Naive thymus-derived CD4-positive, alpha-beta T cell (primary cell): ENCODE measurements at regions of chr10 and their contacts with region 1.

Region 1: GRCh38 chr10:8053446-8054290 is 820 bp upstream of the GATA3 start:
- DNase-seq: peak; percentile 73 to 97 (median 89)
- ATAC-seq: peak; percentile 77
- H3K4me3 ChIP-seq: peak overlapping the region; percentile 87
- H3K4me3 Mint-ChIP-seq: peak overlapping the region; percentile 87 to 97 (median 94)
- H3K27ac ChIP-seq: peak overlapping the region; percentile 82
- H3K27ac Mint-ChIP-seq: peak overlapping the region; percentile 88 to 99 (median 95)
- H3K4me1 ChIP-seq: peaks cover 26 to 42% of the 10 kb centered on the region in 2 donors
- H3K4me1 Mint-ChIP-seq: peaks cover 14 to 45% (median 37%) of the 10 kb centered on the region in 7 donors
- H3K27me3 ChIP-seq: peaks cover 19 to 32% of the 10 kb centered on the region in 2 donors
- H3K27me3 Mint-ChIP-seq: peaks cover 20 to 30% (median 22%) of the 10 kb centered on the region in 5 donors

Region 2: DNA sequence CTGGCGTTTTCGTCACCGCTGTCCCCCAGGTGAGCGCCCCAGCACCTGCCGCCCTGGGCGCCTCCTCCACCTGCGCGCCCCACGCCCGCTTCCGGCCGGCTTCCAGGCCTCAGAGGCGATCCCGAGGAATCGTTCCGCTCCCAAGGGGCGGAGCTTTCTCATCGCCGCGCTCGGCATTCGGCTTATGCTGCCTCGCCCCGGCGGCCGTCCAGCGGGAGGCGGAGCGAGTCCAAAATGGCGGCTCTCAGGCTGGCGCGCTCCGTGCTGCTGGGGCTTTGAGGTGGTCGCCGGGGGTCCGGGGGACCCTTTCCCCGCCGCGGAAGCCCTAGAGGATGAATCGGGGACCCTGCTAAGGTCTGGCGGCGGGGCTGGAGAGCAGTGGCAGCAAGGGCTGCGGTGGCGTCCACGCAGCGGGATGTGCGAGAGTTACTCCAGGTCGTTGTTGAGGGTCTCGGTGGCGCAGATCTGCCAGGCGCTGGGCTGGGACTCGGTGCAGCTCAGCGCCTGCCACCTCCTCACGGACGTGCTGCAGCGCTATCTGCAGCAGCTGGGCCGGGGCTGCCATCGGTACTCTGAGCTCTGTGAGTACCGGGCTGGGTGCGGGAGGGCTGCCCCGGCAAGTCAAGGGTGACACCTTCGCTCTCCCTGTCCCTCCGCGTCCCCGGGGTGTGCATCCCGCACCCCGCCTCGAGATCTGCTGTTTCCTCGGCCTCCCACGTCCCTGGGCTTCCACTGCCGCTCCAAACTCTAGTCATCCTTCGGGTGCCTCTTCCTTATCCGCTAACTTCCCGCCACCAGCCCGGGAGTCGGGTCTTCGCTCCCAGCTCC is 235.2 kb before region 1 on chr10 and contains the start of gene TAF3:
- CTCF ChIA-PET with region 1: no interaction called
- POLR2A ChIA-PET with region 1: no interaction called
- intact Hi-C with region 1: loop called (anchors 2 to 10 kb)
- DNase-seq: peak; percentile 87 to 94 (median 91)
- ATAC-seq: peak; percentile 99
- H3K4me3 ChIP-seq: peak within 1 kb of the TSS; percentile 90
- H3K4me3 Mint-ChIP-seq: peak within 1 kb of the TSS; percentile 92 to 100 (median 97)
- H3K27ac ChIP-seq: peak within 1 kb of the TSS; percentile 75
- H3K27ac Mint-ChIP-seq: peak within 1 kb of the TSS; percentile 71 to 96 (median 93)
- H3K4me1 ChIP-seq: peaks cover 0 to 6% of the 10 kb centered on the region in 2 donors
- H3K4me1 Mint-ChIP-seq: peaks cover 28 to 56% (median 48%) of the 10 kb centered on the region in 7 donors
- H3K27me3 ChIP-seq: no peaks in the 10 kb centered on the region
- H3K27me3 Mint-ChIP-seq: peaks cover 0 to 34% (median 0%) of the 10 kb centered on the region in 5 donors
- total RNA-seq, gene TAF3: 15.3 to 23.9 (median 18.8) TPM

Region 3: DNA sequence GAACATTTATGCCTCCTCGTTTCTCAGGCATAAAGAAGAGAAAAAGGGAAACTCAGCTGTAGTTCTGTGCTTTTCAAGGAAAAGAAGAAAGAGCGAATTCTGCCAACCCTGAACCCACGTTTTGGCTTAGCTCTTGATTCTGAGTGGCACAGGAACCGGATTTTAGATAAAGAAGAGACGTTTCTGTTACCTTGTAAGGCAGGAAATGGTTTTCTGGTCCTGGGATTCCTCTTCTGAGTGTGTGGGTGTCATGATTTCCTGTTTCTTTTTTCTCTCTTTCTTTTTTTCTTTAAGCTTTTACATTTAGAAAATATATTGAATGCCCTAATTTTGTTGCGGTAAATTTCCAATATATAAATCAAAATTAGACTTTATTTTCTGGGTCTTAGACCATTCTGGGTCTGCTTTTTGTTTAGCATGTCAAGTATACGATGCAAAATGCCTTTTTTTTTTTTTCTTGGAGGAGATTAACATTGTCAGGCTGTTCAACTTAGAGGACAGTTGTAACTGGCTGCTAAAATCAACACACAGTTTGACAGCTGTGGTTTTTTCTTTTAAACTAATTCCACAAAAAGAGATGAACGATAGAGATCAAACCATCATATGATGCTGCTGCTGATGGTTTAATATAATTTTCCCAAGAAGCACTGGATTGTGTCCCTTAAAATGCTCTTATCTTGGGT is 191.6 kb after region 1 on chr10:
- CTCF ChIA-PET with region 1: no interaction called
- POLR2A ChIA-PET with region 1: interaction called, 5 read pairs
- intact Hi-C with region 1: loop called in 1 of 2 experiments (anchors 5 kb)
- DNase-seq: peak in 7 of 9 donors; percentile 45 to 75 (median 67)
- ATAC-seq: peak; percentile 86
- H3K4me3 ChIP-seq: no peak overlapping the region
- H3K4me3 Mint-ChIP-seq: peak overlapping the region; percentile 56 to 86 (median 78)
- H3K27ac ChIP-seq: peak overlapping the region; percentile 61
- H3K27ac Mint-ChIP-seq: peak overlapping the region; percentile 80 to 96 (median 91)
- H3K4me1 ChIP-seq: peaks cover 27 to 32% of the 10 kb centered on the region in 2 donors
- H3K4me1 Mint-ChIP-seq: peaks cover 20 to 79% (median 55%) of the 10 kb centered on the region in 7 donors
- H3K27me3 ChIP-seq: no peaks in the 10 kb centered on the region
- H3K27me3 Mint-ChIP-seq: no peaks in the 10 kb centered on the region

Region 4: GRCh38 chr10:8473205-8473604 is 419.5 kb after region 1 on chr10:
- CTCF ChIA-PET with region 1: interaction called, 4 read pairs
- POLR2A ChIA-PET with region 1: no interaction called
- intact Hi-C with region 1: loop called (anchors 1 to 2 kb)
- DNase-seq: peak in 7 of 9 donors; percentile 8 to 61 (median 36)
- ATAC-seq: peak; percentile 51
- H3K4me3 ChIP-seq: no peak overlapping the region
- H3K4me3 Mint-ChIP-seq: no peak overlapping the region
- H3K27ac ChIP-seq: no peak overlapping the region
- H3K27ac Mint-ChIP-seq: no peak overlapping the region
- H3K4me1 ChIP-seq: no peaks in the 10 kb centered on the region
- H3K4me1 Mint-ChIP-seq: peaks cover 0 to 3% (median 0%) of the 10 kb centered on the region in 7 donors
- H3K27me3 ChIP-seq: no peaks in the 10 kb centered on the region
- H3K27me3 Mint-ChIP-seq: peaks cover 8 to 46% (median 25%) of the 10 kb centered on the region in 5 donors

Region 5: DNA sequence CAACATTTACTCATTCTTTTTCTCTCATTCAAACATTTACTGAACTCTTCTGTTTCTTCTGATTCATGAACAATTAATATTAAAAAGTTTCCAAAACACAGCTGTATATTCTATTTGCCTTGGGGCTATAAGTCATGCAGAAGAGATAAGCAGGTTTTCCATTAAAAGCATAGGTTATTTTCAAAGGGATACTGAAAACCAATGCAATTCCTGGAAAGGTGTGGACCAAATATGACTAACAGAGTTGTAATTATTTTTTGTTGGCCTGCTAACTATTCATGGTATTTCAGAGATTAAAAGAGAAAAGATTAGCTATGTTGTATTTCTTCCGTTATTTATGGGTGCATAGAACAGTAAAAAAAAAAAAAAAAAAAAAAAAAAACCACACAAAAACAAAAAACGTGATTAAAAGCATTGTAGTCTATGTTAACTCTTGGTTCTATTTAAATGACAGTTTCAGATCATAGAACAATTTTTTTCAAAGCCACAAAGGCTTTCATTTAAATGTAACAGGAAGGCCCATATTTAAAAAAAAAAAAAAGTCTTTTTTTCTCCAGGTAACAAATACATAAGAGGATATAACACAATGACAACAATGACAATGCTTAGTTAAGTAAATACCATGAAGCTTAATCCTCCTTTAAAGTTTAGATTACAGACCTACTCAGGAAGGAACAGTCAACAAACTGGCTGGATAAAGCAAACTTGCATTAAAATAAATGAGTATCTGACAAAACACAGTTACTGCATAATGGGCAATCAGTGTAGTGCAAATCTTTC is 1043.7 kb after region 1 on chr10:
- CTCF ChIA-PET with region 1: no interaction called
- POLR2A ChIA-PET with region 1: interaction called, 3 read pairs
- intact Hi-C with region 1: loop called in 1 of 2 experiments (anchors 2 kb)
- DNase-seq: peak in 7 of 9 donors; percentile 29 to 89 (median 81)
- ATAC-seq: peak; percentile 81
- H3K4me3 ChIP-seq: no peak overlapping the region
- H3K4me3 Mint-ChIP-seq: peak overlapping the region in 7 of 10 donors; percentile 30 to 82 (median 67)
- H3K27ac ChIP-seq: no peak overlapping the region
- H3K27ac Mint-ChIP-seq: peak overlapping the region in 8 of 9 donors; percentile 64 to 97 (median 90)
- H3K4me1 ChIP-seq: peaks cover 0 to 26% of the 10 kb centered on the region in 2 donors
- H3K4me1 Mint-ChIP-seq: peaks cover 10 to 47% (median 43%) of the 10 kb centered on the region in 7 donors
- H3K27me3 ChIP-seq: no peaks in the 10 kb centered on the region
- H3K27me3 Mint-ChIP-seq: peaks cover 0 to 2% (median 0%) of the 10 kb centered on the region in 5 donors

Region 6: GRCh38 chr10:9302120-9302746 is 1248.6 kb after region 1 on chr10:
- CTCF ChIA-PET with region 1: no interaction called
- POLR2A ChIA-PET with region 1: no interaction called
- intact Hi-C with region 1: loop called (anchors 5 kb)
- DNase-seq: peak in 7 of 9 donors; percentile 21 to 62 (median 53)
- ATAC-seq: peak; percentile 68
- H3K4me3 ChIP-seq: no peak overlapping the region
- H3K4me3 Mint-ChIP-seq: no peak overlapping the region
- H3K27ac ChIP-seq: no peak overlapping the region
- H3K27ac Mint-ChIP-seq: no peak overlapping the region
- H3K4me1 ChIP-seq: no peaks in the 10 kb centered on the region
- H3K4me1 Mint-ChIP-seq: peaks cover 0 to 3% (median 0%) of the 10 kb centered on the region in 7 donors
- H3K27me3 ChIP-seq: no peaks in the 10 kb centered on the region
- H3K27me3 Mint-ChIP-seq: peaks cover 0 to 10% (median 5%) of the 10 kb centered on the region in 5 donors